ENCODE measurements at regions of chr3 and their contacts with region 1.

Region 1: GRCh38 chr3:71875461-71875947 is 90.6 kb upstream of the PROK2 start:
- DNase-seq: peak; percentile 63 to 71 (median 66)
- H3K4me3 ChIP-seq: no peak overlapping the region
- H3K4me3 Mint-ChIP-seq: no peak overlapping the region
- H3K27ac ChIP-seq: no peak overlapping the region
- H3K27ac Mint-ChIP-seq: no peak overlapping the region
- H3K4me1 ChIP-seq: no peaks in the 10 kb centered on the region
- H3K4me1 Mint-ChIP-seq: peaks cover 11% of the 10 kb centered on the region
- H3K27me3 ChIP-seq: peaks cover 19 to 22% of the 10 kb centered on the region in 2 donors
- H3K27me3 Mint-ChIP-seq: peaks cover 27 to 40% (median 36%) of the 10 kb centered on the region in 3 donors
- CTCF ChIP-seq: peak; percentile 89

Region 2: GRCh38 chr3:71907996-71908395 is 32.5 kb after region 1 on chr3:
- intact Hi-C with region 1: no loop called
- DNase-seq: no peak
- H3K4me3 ChIP-seq: no peak overlapping the region
- H3K4me3 Mint-ChIP-seq: peak overlapping the region in 1 of 2 donors; percentile 87
- H3K27ac ChIP-seq: no peak overlapping the region
- H3K27ac Mint-ChIP-seq: peak overlapping the region in 1 of 7 donors; percentile 50
- H3K4me1 ChIP-seq: peaks cover 41 to 47% of the 10 kb centered on the region in 2 donors
- H3K4me1 Mint-ChIP-seq: peaks cover 48% of the 10 kb centered on the region
- H3K27me3 ChIP-seq: peaks cover 68 to 87% of the 10 kb centered on the region in 2 donors
- H3K27me3 Mint-ChIP-seq: peaks cover 92 to 95% (median 92%) of the 10 kb centered on the region in 3 donors
- CTCF ChIP-seq: no peak

Region 3: GRCh38 chr3:71942432-71943187 is 67.1 kb after region 1 on chr3:
- intact Hi-C with region 1: no loop called
- DNase-seq: no peak
- H3K4me3 ChIP-seq: no peak overlapping the region
- H3K4me3 Mint-ChIP-seq: no peak overlapping the region
- H3K27ac ChIP-seq: no peak overlapping the region
- H3K27ac Mint-ChIP-seq: no peak overlapping the region
- H3K4me1 ChIP-seq: no peaks in the 10 kb centered on the region
- H3K4me1 Mint-ChIP-seq: no peaks in the 10 kb centered on the region
- H3K27me3 ChIP-seq: peaks cover 0 to 5% of the 10 kb centered on the region in 2 donors
- H3K27me3 Mint-ChIP-seq: peaks cover 7 to 33% (median 15%) of the 10 kb centered on the region in 3 donors
- CTCF ChIP-seq: no peak

Region 4: GRCh38 chr3:72821161-72821781 is 945.8 kb after region 1 on chr3:
- intact Hi-C with region 1: loop called (anchors 5 to 10 kb)
- DNase-seq: peak in 2 of 3 donors; percentile 7 to 27
- H3K4me3 ChIP-seq: no peak overlapping the region
- H3K4me3 Mint-ChIP-seq: no peak overlapping the region
- H3K27ac ChIP-seq: no peak overlapping the region
- H3K27ac Mint-ChIP-seq: no peak overlapping the region
- H3K4me1 ChIP-seq: peaks cover 4 to 11% of the 10 kb centered on the region in 2 donors
- H3K4me1 Mint-ChIP-seq: peaks cover 7% of the 10 kb centered on the region
- H3K27me3 ChIP-seq: no peaks in the 10 kb centered on the region
- H3K27me3 Mint-ChIP-seq: no peaks in the 10 kb centered on the region
- CTCF ChIP-seq: no peak

Region 5: DNA sequence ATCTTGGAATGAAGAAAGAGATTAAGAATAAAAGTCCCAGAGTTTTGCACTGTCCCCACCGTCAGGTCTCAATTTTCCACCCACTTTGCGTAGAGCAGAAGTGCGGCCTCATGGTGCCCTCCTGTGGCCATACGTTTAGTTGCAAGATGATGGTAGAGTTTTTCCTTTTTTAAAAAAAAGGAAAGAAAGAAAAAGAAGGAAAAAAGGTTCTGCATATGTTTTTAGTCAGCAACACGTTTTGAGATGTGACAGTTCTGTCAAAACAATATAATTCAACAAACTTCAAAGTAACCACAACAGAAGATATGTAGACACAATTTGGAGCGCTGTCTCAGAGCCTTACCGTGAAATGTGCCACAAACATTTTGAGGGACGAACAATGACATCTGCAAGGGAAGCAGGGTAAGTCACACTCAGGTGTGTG is 1210.6 kb after region 1 on chr3:
- intact Hi-C with region 1: loop called in 1 of 2 experiments (anchors 10 kb)
- DNase-seq: peak; percentile 19 to 38 (median 36)
- H3K4me3 ChIP-seq: no peak overlapping the region
- H3K4me3 Mint-ChIP-seq: no peak overlapping the region
- H3K27ac ChIP-seq: no peak overlapping the region
- H3K27ac Mint-ChIP-seq: peak overlapping the region in 1 of 7 donors; percentile 82
- H3K4me1 ChIP-seq: no peaks in the 10 kb centered on the region
- H3K4me1 Mint-ChIP-seq: peaks cover 3% of the 10 kb centered on the region
- H3K27me3 ChIP-seq: no peaks in the 10 kb centered on the region
- H3K27me3 Mint-ChIP-seq: peaks cover 0 to 2% (median 0%) of the 10 kb centered on the region in 3 donors
- CTCF ChIP-seq: peak; percentile 91

Measured in CD14-positive monocyte (primary cell).